ENCODE measurements at regions of chr10 and their contacts with region 1.

Region 1: DNA sequence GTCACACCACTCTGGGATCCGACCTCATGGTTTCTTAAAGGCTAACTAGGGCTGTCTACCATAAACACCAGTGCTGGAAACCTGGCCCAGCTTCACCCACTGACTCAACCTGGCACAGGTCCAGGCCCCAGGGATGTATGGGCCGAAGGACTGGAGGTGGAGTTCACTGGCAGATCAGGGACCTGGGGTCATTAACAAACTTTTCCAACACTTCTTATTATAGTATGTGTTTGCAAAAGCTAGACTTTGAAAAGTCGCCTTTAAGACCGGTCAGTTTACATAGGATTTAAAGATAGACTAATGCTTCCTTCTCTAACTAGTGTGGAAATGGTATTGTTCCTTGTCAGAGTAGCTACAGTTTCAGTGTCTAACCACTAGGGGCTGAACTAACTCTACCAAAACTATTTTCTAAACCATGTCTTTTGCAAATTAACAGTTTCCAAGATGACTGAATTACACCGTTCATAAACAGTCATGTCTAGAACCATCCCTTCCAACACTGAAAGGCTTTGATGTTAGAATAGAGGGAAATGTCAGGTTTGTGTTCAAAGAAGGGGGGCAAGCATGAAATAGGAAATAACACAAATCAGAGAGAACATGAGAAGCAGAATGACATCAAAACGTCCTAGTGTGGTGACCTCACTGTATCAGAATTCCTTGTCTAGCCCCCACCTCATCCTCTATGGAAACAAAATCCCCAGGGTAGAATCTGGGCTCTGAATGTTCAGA is 29.7 kb downstream of the STN1 start:
- DNase-seq: peak; percentile 93
- H3K4me3 ChIP-seq: no peak overlapping the region
- H3K27ac ChIP-seq: peak overlapping the region; percentile 33
- H3K4me1 ChIP-seq: peaks cover 22% of the 10 kb centered on the region
- H3K27me3 ChIP-seq: no peaks in the 10 kb centered on the region
- CTCF ChIP-seq: peak; percentile 68 to 73
- POLR2A ChIP-seq: no peak

Region 2: DNA sequence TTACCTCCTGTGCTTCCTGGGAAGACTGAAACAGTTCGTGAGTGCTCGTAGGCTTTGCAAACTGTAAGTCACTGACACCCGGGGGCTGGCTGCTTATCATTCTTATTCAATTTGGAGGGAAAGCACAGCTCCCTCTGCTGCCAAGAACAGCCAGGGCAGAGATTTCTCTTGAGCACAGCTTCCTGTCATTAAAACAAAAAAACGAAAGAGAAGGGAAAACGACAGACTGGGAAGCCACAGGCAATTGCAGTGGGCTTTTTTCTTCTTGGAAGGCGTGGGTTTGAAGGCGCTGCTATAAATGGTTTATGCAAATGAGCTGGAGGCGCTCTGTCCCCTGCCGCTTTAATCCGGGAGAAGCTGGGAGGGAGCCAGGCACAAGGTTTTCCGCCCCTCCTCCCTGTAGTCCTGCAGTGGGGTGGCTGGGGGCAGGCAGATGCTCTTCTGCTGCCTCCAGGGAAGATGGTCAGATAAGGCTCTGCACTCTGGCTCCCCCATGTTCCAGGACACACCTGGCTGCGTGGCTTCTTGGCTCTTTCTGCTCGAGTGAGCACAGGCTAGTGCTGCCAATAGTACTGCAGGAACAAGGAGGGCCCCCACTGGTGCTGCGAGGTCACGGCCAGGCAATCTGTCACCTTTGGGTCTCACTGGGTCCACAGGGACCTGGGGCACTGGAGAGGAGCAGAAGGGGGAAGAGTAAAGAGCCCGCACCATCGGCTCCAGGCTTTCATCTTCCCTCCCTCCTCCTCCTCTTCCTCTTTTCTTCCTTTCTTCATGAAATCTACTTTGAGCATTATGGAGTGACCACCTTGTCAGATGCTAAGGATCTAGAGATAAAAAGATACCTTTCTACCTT is 345.3 kb before region 1 on chr10:
- CTCF ChIA-PET with region 1: no interaction called
- POLR2A ChIA-PET with region 1: no interaction called
- dilution Hi-C with region 1: no loop called
- intact Hi-C with region 1: no loop called
- DNase-seq: peak; percentile 66
- H3K4me3 ChIP-seq: peak overlapping the region in 1 of 3 experiments; percentile 39
- H3K27ac ChIP-seq: no peak overlapping the region
- H3K4me1 ChIP-seq: peaks cover 4% of the 10 kb centered on the region
- H3K27me3 ChIP-seq: peaks cover 5 to 7% of the 10 kb centered on the region in 2 experiments
- CTCF ChIP-seq: peak; percentile 49 to 56
- POLR2A ChIP-seq: no peak

Region 3: GRCh38 chr10:103712570-103713498 is 175.4 kb before region 1 on chr10:
- CTCF ChIA-PET with region 1: interaction called, 114 read pairs
- POLR2A ChIA-PET with region 1: no interaction called
- dilution Hi-C with region 1: no loop called
- intact Hi-C with region 1: loop called (anchors 1 kb)
- DNase-seq: peak; percentile 71
- H3K4me3 ChIP-seq: no peak overlapping the region
- H3K27ac ChIP-seq: no peak overlapping the region
- H3K4me1 ChIP-seq: peaks cover 2% of the 10 kb centered on the region
- H3K27me3 ChIP-seq: no peaks in the 10 kb centered on the region
- CTCF ChIP-seq: peak; percentile 78 to 88
- POLR2A ChIP-seq: no peak

Region 4: GRCh38 chr10:103763374-103764202 is 124.7 kb before region 1 on chr10:
- CTCF ChIA-PET with region 1: no interaction called
- POLR2A ChIA-PET with region 1: no interaction called
- dilution Hi-C with region 1: no loop called
- intact Hi-C with region 1: no loop called
- DNase-seq: peak; percentile 35
- H3K4me3 ChIP-seq: no peak overlapping the region
- H3K27ac ChIP-seq: peak overlapping the region; percentile 79
- H3K4me1 ChIP-seq: peaks cover 64% of the 10 kb centered on the region
- H3K27me3 ChIP-seq: no peaks in the 10 kb centered on the region
- CTCF ChIP-seq: no peak
- POLR2A ChIP-seq: no peak

Region 5: DNA sequence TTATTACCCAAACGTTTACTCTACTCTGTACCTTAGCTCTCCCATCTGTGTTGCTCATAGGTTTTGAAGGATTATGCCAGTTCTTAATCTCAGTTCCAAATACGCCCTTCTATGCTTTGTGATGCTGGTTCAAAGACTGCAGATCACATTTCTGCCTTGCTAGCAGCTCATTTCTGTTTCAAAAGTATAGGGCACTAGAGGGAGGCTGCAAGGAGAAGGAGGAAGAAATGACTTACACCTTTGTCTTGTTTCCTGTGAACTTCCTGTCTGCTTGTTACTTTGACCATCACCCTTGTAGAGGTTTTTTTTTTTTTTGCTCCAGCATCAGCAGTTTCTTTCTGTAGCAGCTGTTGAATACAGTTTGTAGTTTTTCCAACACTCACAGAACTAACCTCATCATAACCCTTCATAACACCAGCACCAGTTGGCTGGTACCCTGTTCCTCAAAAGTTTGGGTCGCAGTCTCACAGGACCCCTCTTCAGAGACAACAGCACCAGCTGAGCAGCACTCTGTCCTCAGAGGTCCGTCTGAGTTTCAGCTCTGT is 95.2 kb after region 1 on chr10:
- CTCF ChIA-PET with region 1: interaction called, 22 read pairs
- POLR2A ChIA-PET with region 1: no interaction called
- dilution Hi-C with region 1: no loop called
- intact Hi-C with region 1: loop called (anchors 2 kb)
- DNase-seq: peak; percentile 57
- H3K4me3 ChIP-seq: peak overlapping the region in 1 of 3 experiments; percentile 27
- H3K27ac ChIP-seq: peak overlapping the region; percentile 83
- H3K4me1 ChIP-seq: peaks cover 65% of the 10 kb centered on the region
- H3K27me3 ChIP-seq: no peaks in the 10 kb centered on the region
- CTCF ChIP-seq: no peak
- POLR2A ChIP-seq: no peak

Region 6: DNA sequence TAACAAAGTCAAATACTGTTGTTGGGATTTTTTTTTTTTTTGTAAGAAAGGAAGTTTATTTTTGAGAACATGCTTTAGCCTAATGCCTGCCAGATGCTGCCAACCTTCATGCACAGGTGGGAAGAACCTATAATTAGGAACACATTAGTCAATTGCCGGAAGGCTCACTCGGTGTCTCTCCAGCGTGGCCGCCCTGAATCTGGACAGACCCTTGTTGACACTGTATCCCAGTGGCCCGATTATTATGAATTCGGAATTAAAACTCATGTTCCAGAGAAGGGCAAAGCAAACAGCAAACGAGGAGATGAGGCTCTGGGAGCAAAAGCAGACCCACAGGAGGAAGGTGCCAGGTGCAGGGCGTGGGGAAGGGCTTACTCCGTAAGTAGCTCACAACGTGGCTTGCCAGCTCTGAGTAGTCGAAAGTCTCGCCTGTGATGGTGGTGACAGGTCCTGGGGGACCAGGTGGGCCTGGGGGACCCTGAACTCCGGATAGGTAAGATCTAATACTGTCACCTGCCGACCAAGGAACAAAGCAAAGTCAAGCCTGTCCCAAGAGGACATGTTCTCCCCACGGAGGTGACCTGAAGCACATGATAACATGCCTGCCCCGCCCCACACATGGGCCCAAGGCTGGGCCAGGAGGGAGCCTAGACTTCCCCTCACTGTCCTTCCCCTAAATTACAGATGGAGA is 149.1 kb after region 1 on chr10:
- CTCF ChIA-PET with region 1: interaction called, 16 read pairs
- POLR2A ChIA-PET with region 1: no interaction called
- dilution Hi-C with region 1: no loop called
- intact Hi-C with region 1: no loop called
- DNase-seq: no peak
- H3K4me3 ChIP-seq: no peak overlapping the region
- H3K27ac ChIP-seq: no peak overlapping the region
- H3K4me1 ChIP-seq: no peaks in the 10 kb centered on the region
- H3K27me3 ChIP-seq: no peaks in the 10 kb centered on the region
- CTCF ChIP-seq: no peak
- POLR2A ChIP-seq: no peak

Region 7: GRCh38 chr10:104121520-104122224 is 233.4 kb after region 1 on chr10 and contains the start of gene SFR1:
- CTCF ChIA-PET with region 1: interaction called, 22 read pairs
- POLR2A ChIA-PET with region 1: no interaction called
- dilution Hi-C with region 1: no loop called
- intact Hi-C with region 1: loop called (anchors 1 kb)
- DNase-seq: peak; percentile 100
- H3K4me3 ChIP-seq: peak within 1 kb of the TSS; percentile 81 to 91 (median 89)
- H3K27ac ChIP-seq: peak within 1 kb of the TSS; percentile 97
- H3K4me1 ChIP-seq: peaks cover 27% of the 10 kb centered on the region
- H3K27me3 ChIP-seq: no peaks in the 10 kb centered on the region
- CTCF ChIP-seq: peak; percentile 64 to 76
- POLR2A ChIP-seq: peak; percentile 77
- total RNA-seq, gene SFR1: 8.3 and 8.9 TPM in 2 replicates

Region 8: DNA sequence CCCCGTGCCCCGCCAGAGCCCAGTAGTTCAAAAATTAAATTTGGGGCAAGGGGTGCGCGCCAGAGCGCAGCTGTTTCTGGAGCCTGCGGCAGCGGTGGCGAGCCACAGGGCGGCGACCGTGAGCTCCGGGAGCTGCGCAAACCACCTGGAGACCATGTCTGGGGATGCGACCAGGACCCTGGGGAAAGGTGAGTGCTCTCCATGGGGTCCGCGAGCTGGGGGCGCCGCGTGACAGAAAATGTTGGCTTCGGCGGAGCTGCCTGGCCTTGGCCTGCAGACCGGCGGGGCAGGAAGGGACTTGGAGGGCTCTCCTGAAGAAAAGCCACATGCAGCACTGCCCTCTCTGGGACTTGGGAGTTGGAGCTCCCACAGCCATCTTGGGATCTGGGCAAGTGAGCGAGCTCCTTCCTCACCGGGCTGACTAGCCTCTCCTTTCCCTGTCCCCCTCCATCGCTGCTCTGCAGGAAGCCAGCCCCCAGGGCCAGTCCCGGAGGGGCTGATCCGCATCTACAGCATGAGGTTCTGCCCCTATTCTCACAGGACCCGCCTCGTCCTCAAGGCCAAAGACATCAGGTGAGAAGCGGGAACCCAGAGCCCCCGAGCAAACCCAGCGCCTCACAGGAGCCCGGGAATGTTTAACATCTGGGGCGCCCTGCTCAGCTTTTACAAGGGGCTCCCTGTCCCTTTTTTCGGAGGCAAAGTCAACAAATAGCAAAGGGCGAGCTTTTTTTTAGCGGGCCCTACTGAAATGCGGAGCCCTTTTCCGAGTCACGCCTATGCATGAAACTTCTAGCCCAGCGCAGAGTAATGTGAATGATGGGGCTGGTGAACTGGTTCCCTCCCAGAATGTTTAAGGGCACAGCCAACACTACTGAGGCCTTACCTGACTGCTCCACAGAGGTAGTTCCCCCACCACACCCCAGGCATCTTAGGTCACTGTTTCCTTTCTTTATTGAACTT is 386.8 kb after region 1 on chr10:
- CTCF ChIA-PET with region 1: interaction called, 16 read pairs
- POLR2A ChIA-PET with region 1: no interaction called
- dilution Hi-C with region 1: no loop called
- intact Hi-C with region 1: no loop called
- DNase-seq: peak; percentile 50
- H3K4me3 ChIP-seq: no peak overlapping the region
- H3K27ac ChIP-seq: no peak overlapping the region
- H3K4me1 ChIP-seq: no peaks in the 10 kb centered on the region
- H3K27me3 ChIP-seq: peaks cover 0 to 6% of the 10 kb centered on the region in 2 experiments
- CTCF ChIP-seq: peak; percentile 88 to 96
- POLR2A ChIP-seq: no peak